OCI-LY7 (cell line): ENCODE measurements at regions of chr17 and their contacts with region 1.

Region 1: GRCh38 chr17:68057531-68057952 is 22.0 kb downstream of the KPNA2 start:
- DNase-seq: peak; percentile 63
- H3K4me3 ChIP-seq: no peak overlapping the region
- H3K27ac ChIP-seq: no peak overlapping the region
- H3K4me1 ChIP-seq: peaks cover 7% of the 10 kb centered on the region
- CTCF ChIP-seq: peak; percentile 90

Region 2: GRCh38 chr17:67850991-67851631 is 206.4 kb before region 1 on chr17:
- CTCF ChIA-PET with region 1: no interaction called
- POLR2A ChIA-PET with region 1: no interaction called
- intact Hi-C with region 1: no loop called
- DNase-seq: no peak
- H3K4me3 ChIP-seq: no peak overlapping the region
- H3K27ac ChIP-seq: no peak overlapping the region
- H3K4me1 ChIP-seq: peaks cover 20% of the 10 kb centered on the region
- CTCF ChIP-seq: no peak

Region 3: GRCh38 chr17:68145088-68145487 is 87.5 kb after region 1 on chr17:
- CTCF ChIA-PET with region 1: no interaction called
- POLR2A ChIA-PET with region 1: no interaction called
- intact Hi-C with region 1: loop called (anchors 5 kb)
- DNase-seq: no peak
- H3K4me3 ChIP-seq: no peak overlapping the region
- H3K27ac ChIP-seq: no peak overlapping the region
- H3K4me1 ChIP-seq: no peaks in the 10 kb centered on the region
- CTCF ChIP-seq: no peak

Region 4: DNA sequence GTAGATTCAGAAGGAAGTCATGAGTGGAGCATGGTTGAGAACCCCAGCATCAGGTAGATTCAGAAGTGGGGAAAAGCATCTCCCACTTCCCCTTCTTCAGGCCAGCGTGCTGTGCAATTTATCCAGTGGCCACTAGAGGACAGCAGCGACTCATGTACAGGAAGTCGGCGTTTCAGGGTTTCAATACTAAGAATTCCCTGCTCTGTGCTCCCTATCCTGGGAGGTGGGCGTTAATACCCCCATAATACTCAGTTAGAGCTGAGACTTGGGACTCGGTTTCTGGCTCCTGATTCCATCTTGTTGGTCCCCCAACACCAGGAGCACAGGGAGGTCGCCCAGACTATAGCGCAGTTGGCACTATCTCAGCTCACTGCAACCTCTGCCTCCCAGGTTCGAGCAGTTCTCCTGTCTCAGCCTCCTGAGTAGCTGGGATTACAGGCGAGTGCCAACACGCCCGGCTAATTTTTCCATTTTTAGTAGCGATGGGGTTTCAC is 115.0 kb after region 1 on chr17:
- CTCF ChIA-PET with region 1: no interaction called
- POLR2A ChIA-PET with region 1: no interaction called
- intact Hi-C with region 1: loop called (anchors 10 kb)
- DNase-seq: peak; percentile 85
- H3K4me3 ChIP-seq: no peak overlapping the region
- H3K27ac ChIP-seq: no peak overlapping the region
- H3K4me1 ChIP-seq: peaks cover 20% of the 10 kb centered on the region
- CTCF ChIP-seq: peak; percentile 100

Region 5: DNA sequence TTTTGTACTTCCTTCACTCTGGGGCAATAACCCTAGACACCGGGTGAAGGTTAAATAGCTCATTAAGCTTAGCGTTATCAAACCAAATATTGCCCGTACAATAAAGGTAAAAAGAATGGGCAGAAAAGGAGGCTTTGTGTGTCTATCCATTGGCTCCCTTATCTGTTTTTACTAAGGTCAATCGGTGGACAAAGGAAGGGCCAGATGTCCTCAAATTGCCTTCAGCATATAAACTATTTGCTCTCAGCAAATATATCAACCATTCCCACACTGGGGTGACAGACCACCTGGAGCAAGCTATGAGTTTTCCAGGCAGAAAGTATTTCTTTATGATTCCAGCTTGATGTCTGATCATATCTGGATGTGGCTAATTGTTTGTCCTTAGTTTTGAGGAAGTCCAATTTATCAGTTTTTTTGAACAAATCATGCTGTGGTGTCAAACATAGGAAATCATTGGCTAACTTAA is 425.1 kb after region 1 on chr17:
- CTCF ChIA-PET with region 1: no interaction called
- POLR2A ChIA-PET with region 1: interaction called, 10 read pairs
- intact Hi-C with region 1: no loop called
- DNase-seq: no peak
- H3K4me3 ChIP-seq: no peak overlapping the region
- H3K27ac ChIP-seq: no peak overlapping the region
- H3K4me1 ChIP-seq: peaks cover 31% of the 10 kb centered on the region
- CTCF ChIP-seq: no peak